ENCODE measurements at regions of chr11 and their contacts with region 1.

Region 1: GRCh38 chr11:125592305-125593112 is at the start of gene STT3A:
- DNase-seq: peak; percentile 97 to 100 (median 100)
- H3K4me3 ChIP-seq: peak within 1 kb of the TSS; percentile 60 to 96 (median 80)
- H3K27ac ChIP-seq: peak within 1 kb of the TSS; percentile 43 to 99 (median 93)
- H3K27me3 ChIP-seq: no peaks in the 10 kb centered on the region
- CTCF ChIP-seq: peak in 24 of 56 donors; percentile 7 to 51 (median 24)
- total RNA-seq, gene STT3A: 34.3 to 77.7 (median 52.4) TPM

Region 2: GRCh38 chr11:125111343-125112207 is 480.9 kb before region 1 on chr11 and contains the start of gene TMEM218:
- intact Hi-C with region 1: loop called in 1 of 2 experiments (anchors 5 kb)
- DNase-seq: peak; percentile 99 to 100 (median 100)
- H3K4me3 ChIP-seq: peak within 1 kb of the TSS; percentile 50 to 97 (median 86)
- H3K27ac ChIP-seq: peak within 1 kb of the TSS in 57 of 59 donors; percentile 43 to 92 (median 78)
- H3K27me3 ChIP-seq: no peaks in the 10 kb centered on the region
- CTCF ChIP-seq: peak in 14 of 56 donors; percentile 7 to 42 (median 24)
- total RNA-seq, gene TMEM218: 5.4 to 17.7 (median 9.7) TPM

Region 3: DNA sequence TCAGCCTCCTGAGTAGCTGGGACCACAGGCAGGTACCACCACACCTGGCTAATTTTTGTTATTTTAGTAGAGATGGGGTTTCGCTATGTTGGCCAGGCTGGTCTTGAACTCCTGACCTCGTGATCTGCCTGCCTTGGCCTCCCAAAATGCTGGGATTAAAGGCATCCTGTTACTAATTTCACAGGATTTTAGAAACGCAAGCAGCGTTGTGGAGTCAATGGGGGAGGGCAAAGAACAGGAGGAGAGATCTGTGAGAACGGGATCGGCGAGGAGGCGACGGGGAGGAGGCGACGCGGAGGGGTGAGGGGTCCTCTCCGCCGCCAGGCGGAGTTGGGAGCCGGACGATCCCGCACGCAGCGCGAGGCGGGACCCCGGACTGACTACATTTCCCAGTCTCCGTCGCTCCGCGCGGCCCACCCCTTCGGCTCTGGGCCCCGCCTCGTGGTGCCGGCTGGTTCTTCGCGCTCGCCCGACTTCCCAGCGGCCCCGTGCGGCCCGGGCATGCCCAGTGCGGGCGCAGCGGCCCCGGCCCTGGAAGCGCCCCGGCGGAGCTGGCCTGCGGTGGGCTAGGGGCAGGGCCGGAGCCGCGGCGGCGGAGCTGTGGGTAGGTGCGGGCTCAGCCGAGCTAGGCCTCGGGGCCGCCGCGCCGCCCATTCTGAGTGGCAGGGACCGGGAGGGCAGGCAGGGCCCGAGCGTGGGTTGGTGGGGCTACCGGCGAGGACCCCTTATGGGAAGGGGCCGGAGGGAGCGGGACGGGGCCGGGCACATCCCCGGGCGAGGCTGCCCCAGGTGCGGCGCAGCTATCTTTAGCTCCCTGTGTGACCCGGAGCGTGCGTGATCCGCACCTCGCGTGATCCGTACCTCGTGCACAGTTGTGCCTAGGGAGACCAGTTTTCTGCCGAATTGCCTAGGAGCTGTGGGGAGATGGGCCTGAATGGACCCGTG is 23.3 kb before region 1 on chr11 and contains the start of gene EI24:
- intact Hi-C with region 1: loop called in 1 of 2 experiments (anchors 1 kb)
- DNase-seq: peak; percentile 81 to 96 (median 91)
- H3K4me3 ChIP-seq: peak within 1 kb of the TSS; percentile 65 to 99 (median 93)
- H3K27ac ChIP-seq: peak within 1 kb of the TSS; percentile 43 to 96 (median 88)
- H3K27me3 ChIP-seq: no peaks in the 10 kb centered on the region
- CTCF ChIP-seq: peak; percentile 49 to 89 (median 78)
- total RNA-seq, gene EI24: 38.1 to 71.8 (median 53.9) TPM

Region 4: DNA sequence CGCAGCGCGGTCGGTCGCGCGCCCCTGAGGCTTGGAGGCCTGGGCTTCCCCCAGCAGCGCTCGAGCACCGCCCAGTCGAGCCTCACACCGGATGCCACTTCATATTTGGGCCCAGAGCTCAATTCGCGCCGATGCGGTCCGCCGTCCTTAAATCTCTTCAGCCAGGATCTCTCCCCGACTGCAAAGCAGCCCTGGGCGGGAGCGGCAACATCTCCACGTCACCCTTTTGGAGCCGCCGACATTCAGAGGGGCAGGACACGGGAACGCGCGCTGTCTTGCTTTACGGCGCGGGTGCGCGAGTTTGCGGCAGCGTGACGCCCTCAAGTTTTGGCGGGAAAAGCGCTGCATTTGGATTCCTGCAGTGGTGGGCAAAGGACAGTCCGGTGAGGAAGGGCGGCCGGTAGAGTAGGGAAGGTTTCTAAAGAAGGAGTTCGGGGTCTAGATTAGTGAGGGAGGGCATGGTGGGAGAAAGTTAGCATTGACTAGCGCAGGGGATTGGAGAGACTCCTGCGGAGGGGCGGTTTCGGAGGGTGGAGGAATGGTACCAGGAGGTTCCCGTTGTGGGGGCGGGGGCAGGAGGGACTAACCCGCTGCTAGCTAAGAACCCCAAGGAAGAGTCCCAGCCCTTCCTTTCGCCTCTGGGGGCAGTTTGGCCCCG is 33.2 kb after region 1 on chr11:
- intact Hi-C with region 1: loop called (anchors 1 to 2 kb)
- DNase-seq: peak; percentile 82 to 95 (median 88)
- H3K4me3 ChIP-seq: peak overlapping the region; percentile 55 to 95 (median 78)
- H3K27ac ChIP-seq: peak overlapping the region; percentile 73 to 99 (median 95)
- H3K27me3 ChIP-seq: no peaks in the 10 kb centered on the region
- CTCF ChIP-seq: peak in 33 of 56 donors; percentile 2 to 60 (median 29)

Region 5: DNA sequence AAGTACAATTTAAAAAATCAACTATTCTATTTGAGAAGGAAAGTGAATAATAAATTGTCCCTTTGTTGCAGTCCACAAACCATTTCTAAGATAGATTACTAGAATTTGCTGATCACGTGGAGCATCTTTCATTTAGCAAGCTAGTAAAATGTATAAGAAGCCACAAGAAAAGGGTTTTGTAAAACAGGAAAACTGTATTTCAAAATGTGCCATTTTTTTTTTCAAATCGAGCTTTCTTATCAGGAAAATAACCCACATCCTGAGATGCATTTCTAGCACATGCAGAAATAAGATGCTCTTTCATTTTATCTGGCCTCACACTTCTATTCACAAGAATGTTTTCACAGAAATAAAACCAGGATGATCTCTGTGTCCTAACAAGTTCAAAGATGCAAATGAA is 192.2 kb after region 1 on chr11:
- intact Hi-C with region 1: no loop called
- DNase-seq: no peak
- H3K4me3 ChIP-seq: no peak overlapping the region
- H3K27ac ChIP-seq: no peak overlapping the region
- H3K27me3 ChIP-seq: no peaks in the 10 kb centered on the region
- CTCF ChIP-seq: no peak

Measured in dorsolateral prefrontal cortex (tissue), 120 donors.